Mammary epithelial cell (primary cell): ENCODE measurements at regions of chr16 and their contacts with region 1.

Region 1: GRCh38 chr16:1428511-1428910 is 2.4 kb upstream of the PERCC1 start:
- DNase-seq: no peak
- H3K4me3 ChIP-seq: peak overlapping the region; percentile 27 to 63 (median 43)
- H3K27ac ChIP-seq: no peak overlapping the region
- H3K4me1 ChIP-seq: peaks cover 25% of the 10 kb centered on the region
- H3K27me3 ChIP-seq: no peaks in the 10 kb centered on the region
- CTCF ChIP-seq: peak; percentile 52 to 81

Region 2: GRCh38 chr16:1308977-1309885 is 119.3 kb before region 1 on chr16 and contains the start of gene UBE2I:
- CTCF ChIA-PET with region 1: no interaction called
- dilution Hi-C with region 1: loop called (anchors 10 kb)
- in situ Hi-C with region 1: no loop called
- intact Hi-C with region 1: no loop called
- DNase-seq: peak; percentile 99
- H3K4me3 ChIP-seq: peak within 1 kb of the TSS; percentile 72 to 98 (median 94)
- H3K27ac ChIP-seq: peak within 1 kb of the TSS; percentile 96
- H3K4me1 ChIP-seq: peaks cover 25% of the 10 kb centered on the region
- H3K27me3 ChIP-seq: no peaks in the 10 kb centered on the region
- CTCF ChIP-seq: no peak
- total RNA-seq, gene UBE2I: 42.7 to 157 TPM

Region 3: GRCh38 chr16:1481906-1482835 is 53.7 kb after region 1 on chr16:
- CTCF ChIA-PET with region 1: no interaction called
- dilution Hi-C with region 1: loop called (anchors 10 kb)
- in situ Hi-C with region 1: no loop called
- intact Hi-C with region 1: loop called (anchors 5 kb)
- DNase-seq: peak; percentile 74
- H3K4me3 ChIP-seq: no peak overlapping the region
- H3K27ac ChIP-seq: no peak overlapping the region
- H3K4me1 ChIP-seq: no peaks in the 10 kb centered on the region
- H3K27me3 ChIP-seq: no peaks in the 10 kb centered on the region
- CTCF ChIP-seq: no peak

Region 4: GRCh38 chr16:1492923-1493745 is 64.6 kb after region 1 on chr16 and contains the start of gene TELO2:
- CTCF ChIA-PET with region 1: no interaction called
- dilution Hi-C with region 1: loop called (anchors 10 kb)
- in situ Hi-C with region 1: no loop called
- intact Hi-C with region 1: loop called (anchors 5 kb)
- DNase-seq: peak; percentile 72
- H3K4me3 ChIP-seq: peak within 1 kb of the TSS; percentile 77 to 84 (median 82)
- H3K27ac ChIP-seq: peak within 1 kb of the TSS; percentile 41
- H3K4me1 ChIP-seq: peaks cover 21% of the 10 kb centered on the region
- H3K27me3 ChIP-seq: no peaks in the 10 kb centered on the region
- CTCF ChIP-seq: no peak
- total RNA-seq, gene TELO2: 12.7 to 37.7 TPM

Region 5: GRCh38 chr16:1533443-1533951 is 105.0 kb after region 1 on chr16 and contains the start of gene TMEM204:
- CTCF ChIA-PET with region 1: no interaction called
- dilution Hi-C with region 1: loop called (anchors 10 kb)
- in situ Hi-C with region 1: no loop called
- intact Hi-C with region 1: no loop called
- DNase-seq: no peak
- H3K4me3 ChIP-seq: peak within 1 kb of the TSS in 1 of 3 experiments; percentile 37
- H3K27ac ChIP-seq: no peak within 1 kb of the TSS
- H3K4me1 ChIP-seq: peaks cover 42% of the 10 kb centered on the region
- H3K27me3 ChIP-seq: no peaks in the 10 kb centered on the region
- CTCF ChIP-seq: no peak
- total RNA-seq, gene TMEM204: 0.17 TPM in 1 of 2 donors, not detected in the other